ENCODE measurements at regions of chr7 and their contacts with region 1.

Region 1: DNA sequence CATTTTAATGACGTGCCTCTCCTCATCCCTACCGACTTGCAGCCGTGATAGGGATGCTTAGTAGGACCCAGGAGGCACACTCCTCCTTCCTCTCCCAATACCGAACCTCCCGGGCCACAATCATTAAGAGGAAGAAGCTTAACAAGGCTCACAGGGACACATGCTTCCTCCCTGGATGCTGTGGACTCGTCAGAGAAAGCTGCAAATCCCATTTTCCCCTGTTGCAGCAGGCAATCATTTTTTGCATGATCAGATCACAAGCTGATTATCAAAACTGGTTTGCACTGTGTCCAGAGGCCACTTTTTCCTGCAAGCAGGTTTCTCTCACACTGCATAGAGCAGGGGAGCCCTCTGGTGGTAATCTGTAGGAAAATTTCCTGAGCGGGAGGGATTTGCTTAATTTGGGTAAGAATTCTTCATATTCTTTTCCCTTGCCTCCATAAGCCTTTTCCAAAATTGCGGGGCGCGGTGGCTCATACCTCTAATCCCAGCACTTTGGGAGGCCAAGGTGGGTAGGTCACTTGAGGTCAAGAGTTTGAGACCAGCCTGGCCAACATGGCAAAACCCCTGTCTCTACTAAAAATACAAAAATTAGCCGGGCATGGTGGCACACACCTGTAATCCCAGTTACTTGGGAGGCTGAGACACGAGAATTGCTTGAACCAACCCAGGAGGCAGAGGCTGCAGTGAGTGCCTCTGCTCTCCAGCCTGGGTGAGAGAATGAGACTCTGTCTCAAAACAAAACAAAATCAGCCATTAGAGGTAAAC is 16.1 kb upstream of the LAMB4 start:
- DNase-seq: peak; percentile 39 to 77
- H3K4me3 ChIP-seq: peak overlapping the region; percentile 41 to 81 (median 76); a peak in 7 of 8 replicates
- H3K27ac ChIP-seq: no peak overlapping the region
- H3K4me1 ChIP-seq: peaks cover 0 to 5% (median 0%) of the 10 kb centered on the region in 4 experiments; a peak in 3 of 7 replicates
- H3K27me3 ChIP-seq: no peaks in the 10 kb centered on the region
- CTCF ChIP-seq: peak; percentile 26 to 85 (median 80)
- EP300 ChIP-seq: no peak
- POLR2A ChIP-seq: no peak
- RAD21 ChIP-seq: peak; percentile 92 to 93

Region 2: DNA sequence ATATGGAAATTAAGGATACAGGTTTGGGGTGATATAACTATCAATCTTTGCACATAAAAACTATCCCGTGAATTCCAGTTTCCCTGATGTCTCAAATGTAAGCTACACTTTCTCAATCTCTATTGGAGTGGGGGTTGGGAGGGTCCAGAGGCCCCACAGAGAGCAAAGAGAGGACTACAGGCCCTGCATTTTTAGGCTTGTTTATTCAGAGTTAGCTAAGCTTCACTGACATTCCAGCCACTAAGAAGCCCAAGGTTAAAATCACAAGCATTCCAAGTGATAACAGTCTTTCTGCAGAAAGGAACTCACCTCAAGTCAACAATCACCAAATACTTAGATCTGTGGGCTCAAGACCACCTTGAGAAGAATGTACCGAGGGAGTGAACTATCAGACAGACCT is 111.7 kb before region 1 on chr7:
- CTCF ChIA-PET with region 1: interaction called, 13 read pairs
- POLR2A ChIA-PET with region 1: no interaction called
- DNase-seq: no peak
- H3K4me3 ChIP-seq: peak overlapping the region in 1 of 4 experiments; percentile 2; a peak in 2 of 8 replicates
- H3K27ac ChIP-seq: no peak overlapping the region
- H3K4me1 ChIP-seq: peaks cover 0 to 6% (median 2%) of the 10 kb centered on the region in 4 experiments; a peak in 3 of 7 replicates
- H3K27me3 ChIP-seq: no peaks in the 10 kb centered on the region
- CTCF ChIP-seq: no peak
- EP300 ChIP-seq: peak in 1 of 2 experiments; percentile 59; a peak in 1 of 3 replicates
- POLR2A ChIP-seq: no peak
- RAD21 ChIP-seq: no peak

Region 3: GRCh38 chr7:108135446-108136190 is 10.6 kb before region 1 on chr7:
- CTCF ChIA-PET with region 1: interaction called, 64 read pairs
- POLR2A ChIA-PET with region 1: no interaction called
- DNase-seq: no peak
- H3K4me3 ChIP-seq: no peak overlapping the region
- H3K27ac ChIP-seq: no peak overlapping the region
- H3K4me1 ChIP-seq: peaks cover 0 to 6% (median 1%) of the 10 kb centered on the region in 4 experiments; a peak in 1 of 7 replicates
- H3K27me3 ChIP-seq: no peaks in the 10 kb centered on the region
- CTCF ChIP-seq: no peak
- EP300 ChIP-seq: no peak
- POLR2A ChIP-seq: no peak
- RAD21 ChIP-seq: no peak

Region 4: GRCh38 chr7:108839076-108839475 is 692.8 kb after region 1 on chr7:
- CTCF ChIA-PET with region 1: no interaction called
- POLR2A ChIA-PET with region 1: no interaction called
- DNase-seq: no peak
- H3K4me3 ChIP-seq: no peak overlapping the region
- H3K27ac ChIP-seq: no peak overlapping the region
- H3K4me1 ChIP-seq: no peaks in the 10 kb centered on the region
- H3K27me3 ChIP-seq: peaks cover 0 to 1% (median 0%) of the 10 kb centered on the region in 4 experiments; a peak in 1 of 7 replicates
- CTCF ChIP-seq: no peak
- EP300 ChIP-seq: no peak
- POLR2A ChIP-seq: no peak
- RAD21 ChIP-seq: no peak